ENCODE measurements at regions of chr19 and their contacts with region 1.

Region 1: DNA sequence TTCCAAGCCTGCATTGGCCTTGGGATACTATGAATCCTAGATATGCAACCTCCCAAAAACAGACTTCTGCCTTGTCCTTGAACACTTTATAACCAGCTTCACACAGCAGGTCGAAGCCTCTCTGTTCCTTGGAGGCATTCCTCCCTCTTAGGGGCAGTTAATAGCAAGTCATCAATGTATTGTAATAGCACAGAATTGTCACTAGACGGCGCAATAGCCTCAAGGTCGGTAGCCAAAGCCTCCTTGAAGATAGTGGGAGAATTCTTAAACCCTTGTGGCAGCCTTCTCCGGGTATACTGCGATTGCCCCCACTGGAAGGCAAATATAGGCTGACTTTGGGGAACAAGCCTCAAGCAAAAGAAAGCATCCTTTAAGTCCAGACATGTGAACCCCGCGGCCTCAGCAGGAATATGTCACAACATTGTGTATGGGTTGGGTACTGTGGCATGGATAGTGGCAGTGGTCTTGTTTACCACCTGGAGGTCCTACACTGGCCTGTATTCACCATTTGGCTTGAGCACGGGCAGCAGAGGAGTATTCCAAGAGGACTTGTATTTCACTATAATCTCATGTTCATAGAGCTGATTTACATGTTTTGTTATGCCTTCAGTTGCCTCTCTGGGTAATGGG is 61.1 kb downstream of the ZNF431 start:
- DNase-seq: peak; percentile 14
- ATAC-seq: peak; percentile 78
- H3K4me3 ChIP-seq: no peak overlapping the region
- H3K27ac ChIP-seq: no peak overlapping the region
- H3K4me1 ChIP-seq: no peaks in the 10 kb centered on the region
- H3K27me3 ChIP-seq: no peaks in the 10 kb centered on the region
- CTCF ChIP-seq: peak; percentile 47
- POLR2A ChIP-seq: no peak
- RAD21 ChIP-seq: peak; percentile 60

Region 2: GRCh38 chr19:20863176-20863575 is 339.8 kb before region 1 on chr19:
- CTCF ChIA-PET with region 1: no interaction called
- POLR2A ChIA-PET with region 1: no interaction called
- dilution Hi-C with region 1: no loop called
- in situ Hi-C with region 1: no loop called
- intact Hi-C with region 1: no loop called
- DNase-seq: no peak
- ATAC-seq: no peak
- H3K4me3 ChIP-seq: no peak overlapping the region
- H3K27ac ChIP-seq: no peak overlapping the region
- H3K4me1 ChIP-seq: no peaks in the 10 kb centered on the region
- H3K27me3 ChIP-seq: no peaks in the 10 kb centered on the region
- CTCF ChIP-seq: no peak
- POLR2A ChIP-seq: no peak
- RAD21 ChIP-seq: no peak

Region 3: DNA sequence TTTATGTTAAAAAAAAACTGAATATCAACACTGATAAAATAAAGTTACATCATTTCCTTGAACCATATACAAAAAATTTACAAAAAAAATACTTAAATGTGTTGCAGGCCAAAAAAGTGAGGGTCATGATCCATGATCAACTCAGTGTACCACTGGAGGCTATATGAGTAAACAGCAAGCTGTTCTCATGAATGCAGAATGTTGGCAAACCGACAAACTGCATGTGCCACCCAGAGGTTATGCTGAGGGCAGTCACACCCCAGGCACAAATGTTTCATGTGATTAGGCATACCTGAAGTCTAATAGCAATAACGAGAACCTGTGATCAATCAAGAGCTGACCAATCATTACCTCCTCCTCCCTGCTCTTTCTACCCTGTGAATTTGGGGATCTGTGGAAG is 30.7 kb after region 1 on chr19:
- CTCF ChIA-PET with region 1: no interaction called
- POLR2A ChIA-PET with region 1: no interaction called
- dilution Hi-C with region 1: no loop called
- in situ Hi-C with region 1: no loop called
- intact Hi-C with region 1: no loop called
- DNase-seq: no peak
- ATAC-seq: no peak
- H3K4me3 ChIP-seq: no peak overlapping the region
- H3K27ac ChIP-seq: no peak overlapping the region
- H3K4me1 ChIP-seq: no peaks in the 10 kb centered on the region
- H3K27me3 ChIP-seq: no peaks in the 10 kb centered on the region
- CTCF ChIP-seq: no peak
- POLR2A ChIP-seq: no peak
- RAD21 ChIP-seq: no peak

Region 4: GRCh38 chr19:21698215-21698614 is 495.2 kb after region 1 on chr19:
- CTCF ChIA-PET with region 1: no interaction called
- POLR2A ChIA-PET with region 1: no interaction called
- dilution Hi-C with region 1: no loop called
- in situ Hi-C with region 1: no loop called
- intact Hi-C with region 1: loop called (anchors 5 kb)
- DNase-seq: peak; percentile 1
- ATAC-seq: peak; percentile 46; the same call in 1 of the 2 replicates
- H3K4me3 ChIP-seq: no peak overlapping the region
- H3K27ac ChIP-seq: no peak overlapping the region
- H3K4me1 ChIP-seq: no peaks in the 10 kb centered on the region
- H3K27me3 ChIP-seq: no peaks in the 10 kb centered on the region
- CTCF ChIP-seq: peak; percentile 37
- POLR2A ChIP-seq: no peak
- RAD21 ChIP-seq: peak; percentile 31; the same call in 1 of the 2 replicates

Region 5: GRCh38 chr19:21891081-21891480 is 688.1 kb after region 1 on chr19:
- CTCF ChIA-PET with region 1: no interaction called
- POLR2A ChIA-PET with region 1: no interaction called
- dilution Hi-C with region 1: no loop called
- in situ Hi-C with region 1: no loop called
- intact Hi-C with region 1: loop called (anchors 2 kb)
- DNase-seq: no peak
- ATAC-seq: no peak
- H3K4me3 ChIP-seq: no peak overlapping the region
- H3K27ac ChIP-seq: no peak overlapping the region
- H3K4me1 ChIP-seq: no peaks in the 10 kb centered on the region
- H3K27me3 ChIP-seq: no peaks in the 10 kb centered on the region
- CTCF ChIP-seq: no peak
- POLR2A ChIP-seq: no peak
- RAD21 ChIP-seq: no peak